ENCODE measurements at regions of chr17 and their contacts with region 1.

Region 1: GRCh38 chr17:17613708-17614114 is 22.2 kb upstream of the PEMT start:
- DNase-seq: peak; percentile 80
- ATAC-seq: peak; percentile 99
- H3K4me3 Mint-ChIP-seq: no peak overlapping the region
- H3K27ac Mint-ChIP-seq: no peak overlapping the region
- H3K4me1 Mint-ChIP-seq: peaks cover 3% of the 10 kb centered on the region
- H3K27me3 Mint-ChIP-seq: no peaks in the 10 kb centered on the region
- CTCF ChIP-seq: peak; percentile 59

Region 2: GRCh38 chr17:17523001-17523730 is 90.5 kb before region 1 on chr17:
- CTCF ChIA-PET with region 1: no interaction called
- POLR2A ChIA-PET with region 1: no interaction called
- intact Hi-C with region 1: no loop called
- DNase-seq: no peak
- ATAC-seq: no peak
- H3K4me3 Mint-ChIP-seq: no peak overlapping the region
- H3K27ac Mint-ChIP-seq: no peak overlapping the region
- H3K4me1 Mint-ChIP-seq: no peaks in the 10 kb centered on the region
- H3K27me3 Mint-ChIP-seq: no peaks in the 10 kb centered on the region
- CTCF ChIP-seq: no peak

Region 3: GRCh38 chr17:17603178-17603894 is 10.4 kb before region 1 on chr17:
- CTCF ChIA-PET with region 1: interaction called, 13 read pairs
- POLR2A ChIA-PET with region 1: no interaction called
- intact Hi-C with region 1: no loop called
- DNase-seq: no peak
- ATAC-seq: no peak
- H3K4me3 Mint-ChIP-seq: no peak overlapping the region
- H3K27ac Mint-ChIP-seq: no peak overlapping the region
- H3K4me1 Mint-ChIP-seq: no peaks in the 10 kb centered on the region
- H3K27me3 Mint-ChIP-seq: no peaks in the 10 kb centered on the region
- CTCF ChIP-seq: no peak

Region 4: GRCh38 chr17:17783116-17783824 is 169.6 kb after region 1 on chr17:
- CTCF ChIA-PET with region 1: no interaction called
- POLR2A ChIA-PET with region 1: no interaction called
- intact Hi-C with region 1: no loop called
- DNase-seq: peak; percentile 80
- ATAC-seq: peak; percentile 54
- H3K4me3 Mint-ChIP-seq: peak overlapping the region; percentile 58
- H3K27ac Mint-ChIP-seq: no peak overlapping the region
- H3K4me1 Mint-ChIP-seq: peaks cover 24% of the 10 kb centered on the region
- H3K27me3 Mint-ChIP-seq: peaks cover 4% of the 10 kb centered on the region
- CTCF ChIP-seq: peak; percentile 51

Measured in activated CD8-positive, alpha-beta T cell treated with anti-CD3 and anti-CD28 coated beads for 36 hours (primary cell).